HEK293 (cell line): ENCODE measurements at regions of chr14 and their contacts with region 1.

Region 1: DNA sequence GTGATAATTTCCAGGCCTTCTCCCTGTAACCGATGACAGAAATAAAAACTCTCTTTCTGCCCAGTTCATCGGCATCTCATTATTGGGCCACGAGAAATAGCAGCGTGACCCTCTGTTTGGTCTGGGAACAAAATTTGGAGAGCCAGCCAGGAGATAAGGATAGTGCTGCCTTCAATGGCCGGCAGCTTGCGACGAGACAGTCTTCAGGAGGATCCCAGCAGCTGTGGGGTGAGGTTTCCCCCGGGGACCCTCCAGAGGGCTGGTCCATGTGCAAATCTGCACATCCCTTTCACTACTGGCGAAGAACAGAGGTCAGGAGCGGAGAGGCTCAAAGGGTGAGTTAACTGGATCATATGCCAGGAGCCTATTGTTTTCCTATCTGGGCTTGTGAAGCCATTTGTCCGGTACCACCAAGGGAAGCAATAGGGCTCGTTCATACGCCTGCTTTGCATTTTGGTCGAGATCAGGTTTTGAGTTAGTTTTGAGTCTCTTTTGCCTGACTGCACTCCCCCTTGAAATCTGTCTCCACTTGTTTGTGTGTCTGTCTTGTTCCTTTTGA is 4.8 kb downstream of the SLC39A2 start:
- H3K4me3 ChIP-seq: no peak overlapping the region
- H3K27ac ChIP-seq: no peak overlapping the region
- H3K4me1 ChIP-seq: no peaks in the 10 kb centered on the region
- CTCF ChIP-seq: no peak

Region 2: GRCh38 chr14:20989572-20990551 is 14.0 kb before region 1 on chr14 and contains the start of gene METTL17:
- CTCF ChIA-PET with region 1: interaction called, 13 read pairs
- POLR2A ChIA-PET with region 1: interaction called, 4 read pairs
- H3K4me3 ChIP-seq: peak within 1 kb of the TSS; percentile 94
- H3K27ac ChIP-seq: peak within 1 kb of the TSS; percentile 76
- H3K4me1 ChIP-seq: 0 out of 2 replicates have a peak, but pooled peaks cover 2% of the 10 kb centered on the region
- CTCF ChIP-seq: peak; percentile 85